Endothelial cell of umbilical vein (primary cell): ENCODE measurements at regions of chr7 and their contacts with region 1.

Region 1: GRCh38 chr7:992709-993607 is 10.0 kb downstream of the CYP2W1 start:
- DNase-seq: peak; percentile 92
- H3K4me3 ChIP-seq: no peak overlapping the region
- H3K27ac ChIP-seq: no peak overlapping the region
- H3K4me1 ChIP-seq: peaks cover 2% of the 10 kb centered on the region
- H3K27me3 ChIP-seq: no peaks in the 10 kb centered on the region
- CTCF ChIP-seq: peak; percentile 100
- POLR2A ChIP-seq: no peak

Region 2: GRCh38 chr7:974820-975681 is 17.9 kb before region 1 on chr7 and contains the start of gene COX19:
- CTCF ChIA-PET with region 1: interaction called, 12 read pairs
- POLR2A ChIA-PET with region 1: no interaction called
- dilution Hi-C with region 1: no loop called
- intact Hi-C with region 1: no loop called
- DNase-seq: peak; percentile 89
- H3K4me3 ChIP-seq: peak within 1 kb of the TSS; percentile 63 to 93 (median 78)
- H3K27ac ChIP-seq: peak within 1 kb of the TSS; percentile 87
- H3K4me1 ChIP-seq: peaks cover 9% of the 10 kb centered on the region
- H3K27me3 ChIP-seq: no peaks in the 10 kb centered on the region
- CTCF ChIP-seq: no peak
- POLR2A ChIP-seq: peak; percentile 86
- total RNA-seq, gene COX19: 10.6 and 11.3 TPM in 2 replicates

Region 3: GRCh38 chr7:1028031-1028770 is 35.2 kb after region 1 on chr7:
- CTCF ChIA-PET with region 1: interaction called, 18 read pairs
- POLR2A ChIA-PET with region 1: no interaction called
- dilution Hi-C with region 1: no loop called
- intact Hi-C with region 1: loop called (anchors 1 kb)
- DNase-seq: peak; percentile 88
- H3K4me3 ChIP-seq: peak overlapping the region; percentile 5 to 80 (median 51)
- H3K27ac ChIP-seq: peak overlapping the region; percentile 31
- H3K4me1 ChIP-seq: peaks cover 8% of the 10 kb centered on the region
- H3K27me3 ChIP-seq: no peaks in the 10 kb centered on the region
- CTCF ChIP-seq: no peak
- POLR2A ChIP-seq: peak; percentile 34

Region 4: DNA sequence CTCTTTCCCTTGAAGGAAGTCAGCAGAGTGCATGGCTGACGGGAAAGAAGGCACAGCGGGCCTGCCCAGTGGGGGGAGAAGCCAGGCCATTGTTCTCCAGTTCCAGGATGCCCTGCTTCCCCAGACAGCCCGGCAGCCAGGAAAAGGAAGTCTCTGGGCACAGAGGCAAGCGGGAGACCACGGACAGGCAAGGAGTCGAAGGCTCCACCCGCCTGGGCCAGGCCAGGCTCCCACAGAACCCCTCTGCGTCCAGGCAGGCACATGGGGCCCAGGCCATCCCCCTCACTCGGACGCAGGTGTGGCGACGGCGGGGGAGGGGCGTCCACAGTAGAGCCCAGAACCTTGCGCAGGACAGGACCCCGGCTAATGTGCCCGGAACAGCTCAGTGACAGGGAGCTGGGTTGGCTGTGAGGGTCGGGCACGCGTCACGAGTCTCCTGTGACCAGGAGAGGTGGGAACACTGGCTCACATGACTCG is 60.1 kb after region 1 on chr7:
- CTCF ChIA-PET with region 1: interaction called, 23 read pairs
- POLR2A ChIA-PET with region 1: no interaction called
- dilution Hi-C with region 1: no loop called
- intact Hi-C with region 1: loop called (anchors 1 kb)
- DNase-seq: peak; percentile 83
- H3K4me3 ChIP-seq: no peak overlapping the region
- H3K27ac ChIP-seq: peak overlapping the region; percentile 86
- H3K4me1 ChIP-seq: peaks cover 58% of the 10 kb centered on the region
- H3K27me3 ChIP-seq: no peaks in the 10 kb centered on the region
- CTCF ChIP-seq: no peak
- POLR2A ChIP-seq: no peak

Region 5: DNA sequence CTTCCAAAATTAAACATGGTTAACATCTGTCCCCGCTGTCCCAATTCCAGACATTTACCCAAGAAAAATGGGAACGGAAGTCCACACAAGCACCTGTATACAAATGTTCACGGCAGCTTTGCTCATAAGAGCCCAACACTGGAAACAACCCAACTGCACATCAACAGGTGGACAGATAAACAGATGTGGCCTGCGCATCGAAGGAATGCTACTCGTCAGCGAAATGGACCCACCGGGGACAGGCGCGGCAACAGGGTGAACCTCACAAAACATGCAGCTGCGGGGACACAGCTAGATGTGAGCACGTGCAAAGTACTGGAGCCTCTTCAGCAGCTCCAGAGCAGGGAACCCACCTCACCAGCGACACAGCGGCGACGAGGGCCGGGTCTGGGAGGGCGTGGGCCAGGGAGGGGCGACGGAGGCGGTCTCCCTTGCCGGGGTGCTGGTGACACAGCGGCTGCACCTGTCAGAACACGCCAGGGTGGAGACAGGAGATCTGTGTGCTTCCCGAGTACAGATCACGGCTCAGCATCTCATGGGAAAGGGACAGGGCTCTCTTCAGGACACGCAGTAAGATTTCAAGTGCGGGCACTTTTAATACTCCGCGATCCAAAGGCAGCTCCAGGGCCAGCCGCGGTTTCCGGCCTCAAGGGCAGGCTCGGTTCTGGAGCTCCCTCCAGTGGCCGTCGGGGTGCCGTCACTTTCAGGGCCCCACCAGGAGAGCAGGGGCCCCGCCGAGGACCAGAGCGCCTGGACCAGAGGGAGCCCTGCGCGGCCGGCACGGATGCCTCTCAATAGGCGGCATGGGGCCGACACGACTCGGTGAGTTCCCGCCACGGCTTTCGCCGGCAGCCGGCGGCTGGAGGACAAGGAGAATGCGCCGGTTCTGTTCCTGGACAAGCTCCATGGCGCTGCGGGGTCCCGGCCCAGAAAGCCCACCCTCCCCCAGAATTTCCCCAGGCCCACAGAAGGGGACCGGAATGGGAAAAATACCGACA is 72.6 kb after region 1 on chr7:
- CTCF ChIA-PET with region 1: interaction called, 459 read pairs
- POLR2A ChIA-PET with region 1: interaction called, 3 read pairs
- dilution Hi-C with region 1: no loop called
- intact Hi-C with region 1: loop called (anchors 1 kb)
- DNase-seq: peak; percentile 65
- H3K4me3 ChIP-seq: no peak overlapping the region
- H3K27ac ChIP-seq: no peak overlapping the region
- H3K4me1 ChIP-seq: peaks cover 6% of the 10 kb centered on the region
- H3K27me3 ChIP-seq: no peaks in the 10 kb centered on the region
- CTCF ChIP-seq: peak; percentile 91 to 98
- POLR2A ChIP-seq: no peak

Region 6: GRCh38 chr7:1123715-1124114 is 130.8 kb after region 1 on chr7:
- CTCF ChIA-PET with region 1: interaction called, 44 read pairs
- POLR2A ChIA-PET with region 1: no interaction called
- dilution Hi-C with region 1: no loop called
- intact Hi-C with region 1: loop called (anchors 2 kb)
- DNase-seq: peak; percentile 94
- H3K4me3 ChIP-seq: no peak overlapping the region
- H3K27ac ChIP-seq: peak overlapping the region; percentile 75
- H3K4me1 ChIP-seq: peaks cover 12% of the 10 kb centered on the region
- H3K27me3 ChIP-seq: no peaks in the 10 kb centered on the region
- CTCF ChIP-seq: peak; percentile 78 to 93
- POLR2A ChIP-seq: peak; percentile 38

Region 7: DNA sequence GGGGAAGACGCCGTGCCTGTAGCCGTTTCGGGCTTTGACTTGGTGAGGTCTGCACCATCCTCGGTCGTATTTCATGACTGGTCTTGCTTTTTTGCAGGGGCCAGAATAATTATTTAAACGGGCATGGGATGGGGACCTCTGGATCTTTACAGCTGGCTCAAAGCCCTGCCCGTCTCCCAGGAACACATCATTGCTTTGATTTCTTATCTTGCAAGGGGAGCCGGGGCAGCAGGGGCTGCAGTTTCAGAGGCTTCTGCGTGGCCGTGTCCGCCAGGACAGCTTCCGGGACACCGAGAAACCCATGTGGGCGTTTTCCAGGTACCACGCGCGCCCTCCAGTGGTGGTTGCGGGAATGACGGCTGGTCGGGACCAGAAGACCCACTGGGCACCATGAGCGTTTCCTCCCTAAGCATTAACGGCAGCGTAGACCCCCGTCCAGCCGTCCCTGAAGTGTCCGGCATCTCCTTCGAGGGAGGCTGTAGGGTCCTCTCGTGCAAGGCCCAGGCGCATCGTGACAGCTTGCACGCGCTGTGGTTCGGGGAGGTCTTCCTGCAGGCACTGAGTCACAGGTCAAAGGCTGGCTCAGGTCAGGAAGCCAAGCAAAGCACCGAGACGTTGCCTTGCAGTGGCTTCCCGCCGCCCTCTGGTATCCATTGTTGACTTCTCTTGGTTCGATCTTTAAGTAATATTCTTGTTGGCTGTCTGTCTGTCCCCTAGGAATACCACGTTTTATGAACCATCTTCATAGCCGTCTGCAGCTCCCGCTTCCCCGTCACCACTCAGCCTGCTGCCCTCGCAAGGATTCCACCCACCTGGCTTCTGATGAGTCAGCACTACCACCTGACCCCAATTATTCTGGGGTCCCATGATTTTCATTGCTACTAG is 183.3 kb after region 1 on chr7:
- CTCF ChIA-PET with region 1: interaction called, 32 read pairs
- POLR2A ChIA-PET with region 1: no interaction called
- dilution Hi-C with region 1: no loop called
- intact Hi-C with region 1: loop called (anchors 1 kb)
- DNase-seq: peak; percentile 80
- H3K4me3 ChIP-seq: peak overlapping the region in 2 of 3 experiments; percentile 17 to 22
- H3K27ac ChIP-seq: peak overlapping the region; percentile 20
- H3K4me1 ChIP-seq: peaks cover 14% of the 10 kb centered on the region
- H3K27me3 ChIP-seq: no peaks in the 10 kb centered on the region
- CTCF ChIP-seq: peak; percentile 97 to 98
- POLR2A ChIP-seq: no peak